WTC11 (cell line): ENCODE measurements at regions of chr11 and their contacts with region 1.

Region 1: GRCh38 chr11:64304316-64305072 is 830 bp upstream of the ESRRA start:
- DNase-seq: peak; percentile 97
- ATAC-seq: peak; percentile 31
- H3K4me3 Mint-ChIP-seq: peak overlapping the region; percentile 91
- H3K27ac Mint-ChIP-seq: peak overlapping the region; percentile 100
- H3K4me1 Mint-ChIP-seq: peaks cover 16% of the 10 kb centered on the region
- H3K27me3 Mint-ChIP-seq: peaks cover 26% of the 10 kb centered on the region
- CTCF ChIP-seq: peak; percentile 84

Region 2: GRCh38 chr11:64100360-64100759 is 204.1 kb before region 1 on chr11:
- CTCF ChIA-PET with region 1: no interaction called
- POLR2A ChIA-PET with region 1: no interaction called
- DNase-seq: peak; percentile 62
- ATAC-seq: peak; percentile 65
- H3K4me3 Mint-ChIP-seq: no peak overlapping the region
- H3K27ac Mint-ChIP-seq: no peak overlapping the region
- H3K4me1 Mint-ChIP-seq: peaks cover 8% of the 10 kb centered on the region
- H3K27me3 Mint-ChIP-seq: peaks cover 72% of the 10 kb centered on the region
- CTCF ChIP-seq: no peak

Region 3: GRCh38 chr11:64204464-64204989 is 100.0 kb before region 1 on chr11:
- CTCF ChIA-PET with region 1: interaction called, 76 read pairs
- POLR2A ChIA-PET with region 1: no interaction called
- DNase-seq: peak; percentile 82
- ATAC-seq: peak; percentile 88
- H3K4me3 Mint-ChIP-seq: no peak overlapping the region
- H3K27ac Mint-ChIP-seq: peak overlapping the region; percentile 88
- H3K4me1 Mint-ChIP-seq: peaks cover 6% of the 10 kb centered on the region
- H3K27me3 Mint-ChIP-seq: no peaks in the 10 kb centered on the region
- CTCF ChIP-seq: peak; percentile 31; the same call in 1 of the 2 replicates

Region 4: GRCh38 chr11:64240394-64241174 is 63.9 kb before region 1 on chr11 and contains the start of gene FKBP2:
- CTCF ChIA-PET with region 1: interaction called, 11 read pairs
- POLR2A ChIA-PET with region 1: interaction called, 3 read pairs
- DNase-seq: peak; percentile 97
- ATAC-seq: peak; percentile 57
- H3K4me3 Mint-ChIP-seq: peak within 1 kb of the TSS; percentile 88
- H3K27ac Mint-ChIP-seq: peak within 1 kb of the TSS; percentile 100
- H3K4me1 Mint-ChIP-seq: peaks cover 30% of the 10 kb centered on the region
- H3K27me3 Mint-ChIP-seq: no peaks in the 10 kb centered on the region
- CTCF ChIP-seq: no peak
- total RNA-seq, gene FKBP2: 57.2 to 65.9 TPM (median 61.7 TPM) in 3 replicates

Region 5: DNA sequence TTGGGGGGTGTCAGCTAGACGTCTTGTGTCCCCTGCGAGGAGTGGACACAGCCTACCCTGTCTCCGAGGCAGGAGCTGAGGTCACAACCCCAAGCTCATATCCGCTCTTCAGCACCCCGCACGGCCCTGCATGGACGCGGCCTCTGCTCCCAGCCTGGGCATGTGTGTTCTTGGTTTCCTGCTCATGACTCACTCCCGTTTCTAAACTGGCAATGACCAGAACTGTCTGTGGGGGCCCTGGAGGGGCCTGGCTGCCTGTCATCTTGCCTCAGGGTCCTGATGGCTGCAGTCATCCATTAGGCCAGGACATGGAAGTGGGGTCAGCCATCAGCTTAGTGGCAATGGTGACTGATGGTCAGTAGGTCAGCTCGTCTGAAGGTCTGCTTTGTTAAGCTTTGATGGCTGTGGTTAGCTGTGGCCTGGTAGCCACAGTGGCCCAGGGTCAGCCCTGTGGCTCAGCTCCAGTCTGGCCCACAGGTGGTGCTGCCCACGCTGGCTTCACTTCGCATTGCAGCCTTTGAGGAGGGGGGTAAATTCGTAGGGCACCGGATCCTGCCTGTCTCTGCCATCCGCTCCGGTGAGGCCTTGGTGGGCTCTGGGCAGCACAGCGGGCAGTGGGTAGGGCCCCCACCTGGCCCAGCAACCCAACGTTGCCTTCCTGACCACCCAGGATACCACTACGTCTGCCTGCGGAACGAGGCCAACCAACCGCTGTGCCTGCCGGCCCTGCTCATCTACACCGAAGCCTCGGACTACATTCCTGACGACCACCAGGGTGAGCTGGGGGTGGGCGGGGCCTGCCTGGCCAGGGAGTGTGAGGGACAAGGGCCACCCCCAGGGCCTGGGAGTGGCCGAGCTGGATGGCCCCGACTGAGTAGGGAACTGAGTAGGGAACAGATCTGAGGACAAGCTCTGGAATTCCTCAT is 41.2 kb before region 1 on chr11:
- CTCF ChIA-PET with region 1: interaction called, 69 read pairs
- POLR2A ChIA-PET with region 1: no interaction called
- DNase-seq: no peak
- ATAC-seq: peak; percentile 53
- H3K4me3 Mint-ChIP-seq: no peak overlapping the region
- H3K27ac Mint-ChIP-seq: peak overlapping the region; percentile 97
- H3K4me1 Mint-ChIP-seq: peaks cover 3% of the 10 kb centered on the region; the same call in 1 of the 2 replicates
- H3K27me3 Mint-ChIP-seq: no peaks in the 10 kb centered on the region
- CTCF ChIP-seq: no peak

Region 6: GRCh38 chr11:64276653-64277431 is 27.7 kb before region 1 on chr11:
- CTCF ChIA-PET with region 1: interaction called, 151 read pairs
- POLR2A ChIA-PET with region 1: interaction called, 15 read pairs
- DNase-seq: no peak
- ATAC-seq: no peak
- H3K4me3 Mint-ChIP-seq: no peak overlapping the region
- H3K27ac Mint-ChIP-seq: no peak overlapping the region
- H3K4me1 Mint-ChIP-seq: peaks cover 21% of the 10 kb centered on the region
- H3K27me3 Mint-ChIP-seq: no peaks in the 10 kb centered on the region
- CTCF ChIP-seq: no peak

Region 7: DNA sequence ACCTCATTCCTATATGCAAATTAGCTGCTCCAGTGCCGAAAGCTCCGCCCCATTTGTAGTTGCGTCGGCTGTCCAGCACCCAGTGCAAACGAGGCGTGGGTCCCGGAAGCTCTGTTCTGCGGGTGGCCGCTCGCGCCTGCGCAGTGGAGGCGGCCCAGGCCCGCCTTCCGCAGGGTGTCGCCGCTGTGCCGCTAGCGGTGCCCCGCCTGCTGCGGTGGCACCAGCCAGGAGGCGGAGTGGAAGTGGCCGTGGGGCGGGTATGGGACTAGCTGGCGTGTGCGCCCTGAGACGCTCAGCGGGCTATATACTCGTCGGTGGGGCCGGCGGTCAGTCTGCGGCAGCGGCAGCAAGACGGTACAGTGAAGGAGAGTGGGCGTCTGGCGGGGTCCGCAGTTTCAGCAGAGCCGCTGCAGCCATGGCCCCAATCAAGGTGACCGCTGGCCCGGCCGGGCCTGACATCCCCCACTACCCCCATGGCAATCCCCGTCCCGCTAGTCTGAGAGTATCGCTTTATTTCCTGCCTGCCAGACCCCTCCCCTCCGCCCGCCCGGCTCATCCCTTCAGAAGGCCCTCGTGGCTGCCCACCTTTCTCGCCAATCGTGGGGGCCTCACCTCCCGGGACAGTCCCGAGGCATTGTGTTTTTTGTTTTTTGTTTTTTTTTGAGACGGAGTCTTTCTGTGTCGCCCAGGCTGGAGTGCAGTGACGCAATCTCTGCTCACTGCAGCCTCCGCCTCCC is 13.6 kb after region 1 on chr11 and contains the start of gene PRDX5:
- CTCF ChIA-PET with region 1: interaction called, 47 read pairs
- POLR2A ChIA-PET with region 1: interaction called, 25 read pairs
- DNase-seq: peak; percentile 90
- ATAC-seq: peak; percentile 71
- H3K4me3 Mint-ChIP-seq: peak within 1 kb of the TSS; percentile 90
- H3K27ac Mint-ChIP-seq: peak within 1 kb of the TSS; percentile 99
- H3K4me1 Mint-ChIP-seq: peaks cover 17% of the 10 kb centered on the region
- H3K27me3 Mint-ChIP-seq: no peaks in the 10 kb centered on the region
- CTCF ChIP-seq: no peak
- total RNA-seq, gene PRDX5: 255 to 293 TPM (median 282 TPM) in 3 replicates

Region 8: DNA sequence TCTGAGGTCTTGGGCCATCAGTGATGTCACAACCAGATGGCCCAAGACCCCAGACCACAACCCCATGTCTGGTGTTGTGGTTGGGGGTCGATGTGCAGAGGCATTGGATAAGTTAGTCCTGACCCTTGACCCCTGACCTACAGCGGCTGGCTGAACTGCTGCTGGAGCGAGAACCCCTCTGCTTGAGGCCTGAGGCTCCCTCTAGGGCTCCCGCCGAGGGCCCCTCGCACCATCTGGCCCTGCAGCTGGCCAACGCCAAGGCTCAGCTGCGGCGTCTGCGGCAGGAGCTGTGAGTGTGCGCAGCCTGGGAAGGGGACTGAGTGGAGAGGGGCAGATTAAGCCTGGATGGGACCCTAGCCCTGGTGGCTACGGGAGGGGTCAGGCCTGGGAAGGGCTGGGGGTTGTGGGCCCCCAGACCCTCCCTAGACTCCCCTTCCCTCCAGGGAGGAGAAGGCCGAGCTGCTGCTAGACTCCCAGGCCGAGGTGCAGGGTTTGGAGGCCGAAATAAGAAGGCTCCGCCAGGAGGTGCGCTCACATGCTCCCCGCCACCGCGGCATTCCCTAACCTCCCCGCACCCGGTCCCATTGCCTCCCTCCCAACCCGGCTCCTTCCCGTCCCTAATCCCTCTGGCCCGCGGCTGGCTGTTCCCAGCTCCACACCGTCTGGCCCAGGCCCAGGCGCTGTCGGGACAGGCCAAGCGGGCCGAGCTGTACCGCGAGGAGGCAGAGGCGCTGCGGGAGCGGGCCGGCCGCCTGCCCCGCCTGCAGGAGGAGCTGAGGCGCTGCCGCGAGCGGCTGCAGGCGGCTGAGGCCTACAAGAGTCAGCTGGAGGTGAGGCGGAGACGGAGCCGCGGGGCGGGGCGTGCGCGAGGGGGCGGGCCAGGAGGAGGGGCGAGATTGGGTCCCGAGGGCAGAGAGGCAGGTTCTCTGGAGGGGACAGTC is 37.6 kb after region 1 on chr11:
- CTCF ChIA-PET with region 1: interaction called, 33 read pairs
- POLR2A ChIA-PET with region 1: interaction called, 5 read pairs
- DNase-seq: peak; percentile 97
- ATAC-seq: peak; percentile 75
- H3K4me3 Mint-ChIP-seq: peak overlapping the region; percentile 69
- H3K27ac Mint-ChIP-seq: no peak overlapping the region
- H3K4me1 Mint-ChIP-seq: peaks cover 21% of the 10 kb centered on the region
- H3K27me3 Mint-ChIP-seq: peaks cover 30% of the 10 kb centered on the region
- CTCF ChIP-seq: no peak

Region 9: DNA sequence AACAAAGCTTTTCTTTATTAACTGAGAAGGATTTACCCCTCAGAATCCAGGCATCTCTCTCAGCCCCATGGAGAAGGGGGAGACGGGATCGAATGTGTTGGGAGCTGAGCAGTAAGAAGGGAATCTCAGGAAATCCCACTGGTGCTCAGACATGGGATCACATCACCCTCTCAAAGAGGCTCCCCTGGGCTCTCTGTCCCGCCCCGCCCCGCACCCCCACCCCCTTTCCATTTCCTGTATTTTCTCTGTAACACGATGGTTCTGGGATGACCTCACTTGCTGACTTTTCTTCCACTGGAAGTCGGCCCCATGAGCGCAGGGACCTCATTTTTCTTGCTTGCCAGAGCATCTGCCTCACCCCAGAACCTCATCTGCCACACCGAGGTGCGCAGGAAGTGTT is 154.5 kb after region 1 on chr11:
- CTCF ChIA-PET with region 1: no interaction called
- POLR2A ChIA-PET with region 1: no interaction called
- DNase-seq: no peak
- ATAC-seq: peak; percentile 43; the same call in 1 of the 2 replicates
- H3K4me3 Mint-ChIP-seq: no peak overlapping the region
- H3K27ac Mint-ChIP-seq: no peak overlapping the region
- H3K4me1 Mint-ChIP-seq: peaks cover 16% of the 10 kb centered on the region
- H3K27me3 Mint-ChIP-seq: peaks cover 51% of the 10 kb centered on the region
- CTCF ChIP-seq: no peak